Stomach (tissue), 19 donors: ENCODE measurements at regions of chr15 and their contacts with region 1.

Region 1: GRCh38 chr15:98518823-98519561 is 129.3 kb upstream of the IGF1R start:
- DNase-seq: peak; percentile 44 to 93
- H3K4me3 ChIP-seq: no peak overlapping the region
- H3K27ac ChIP-seq: no peak overlapping the region
- H3K4me1 ChIP-seq: peaks cover 0 to 11% (median 6%) of the 10 kb centered on the region in 4 donors
- H3K27me3 ChIP-seq: no peaks in the 10 kb centered on the region
- CTCF ChIP-seq: peak in 5 of 7 experiments; percentile 59 to 84 (median 75)
- EP300 ChIP-seq: no peak
- POLR2A ChIP-seq: no peak

Region 2: DNA sequence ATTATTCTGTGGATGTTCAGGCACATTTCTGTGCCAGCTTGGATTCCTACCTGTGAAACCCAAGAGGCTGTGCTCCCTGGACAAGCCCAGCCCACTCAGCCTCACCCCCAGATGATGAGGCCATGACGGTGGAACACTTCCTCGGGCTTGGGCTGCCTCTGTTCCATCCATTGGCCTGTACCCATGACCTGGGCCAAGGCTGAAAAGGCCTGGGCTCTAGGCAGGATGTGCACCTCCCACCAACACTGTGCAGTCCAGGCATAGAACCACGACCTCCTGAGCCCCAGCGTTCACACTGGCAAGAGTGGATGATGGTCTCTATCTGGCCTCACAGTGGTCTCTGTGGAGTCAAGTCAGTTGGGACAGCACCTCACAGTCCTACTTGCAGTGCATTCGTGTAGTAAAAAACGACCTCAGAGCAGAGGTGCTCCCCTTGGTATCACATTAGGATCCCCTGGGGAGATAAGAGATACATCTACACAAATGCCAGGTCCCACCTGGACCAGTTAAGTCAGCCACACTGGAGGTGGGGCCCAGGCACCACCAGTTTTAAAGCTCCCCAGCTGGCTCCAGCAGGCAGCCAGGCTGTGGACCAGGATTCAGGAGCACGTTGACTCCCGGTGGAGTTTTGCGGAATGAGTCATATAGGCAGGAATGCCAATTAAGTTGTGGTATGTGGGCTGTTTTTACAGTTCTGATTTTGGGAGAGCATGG is 90.3 kb after region 1 on chr15:
- intact Hi-C with region 1: no loop called
- DNase-seq: peak in 1 of 2 donors; percentile 27
- H3K4me3 ChIP-seq: no peak overlapping the region
- H3K27ac ChIP-seq: no peak overlapping the region
- H3K4me1 ChIP-seq: no peaks in the 10 kb centered on the region
- H3K27me3 ChIP-seq: peaks cover 0 to 7% (median 0%) of the 10 kb centered on the region in 3 donors
- CTCF ChIP-seq: no peak
- EP300 ChIP-seq: no peak
- POLR2A ChIP-seq: no peak

Region 3: GRCh38 chr15:99068186-99068585 is 549.2 kb after region 1 on chr15:
- intact Hi-C with region 1: loop called (anchors 10 kb)
- DNase-seq: no peak
- H3K4me3 ChIP-seq: no peak overlapping the region
- H3K27ac ChIP-seq: no peak overlapping the region
- H3K4me1 ChIP-seq: no peaks in the 10 kb centered on the region
- H3K27me3 ChIP-seq: no peaks in the 10 kb centered on the region
- CTCF ChIP-seq: no peak
- EP300 ChIP-seq: no peak
- POLR2A ChIP-seq: no peak